Natural killer cell (primary cell): ENCODE measurements at regions of chr1 and their contacts with region 1.

Region 1: GRCh38 chr1:167220537-167221125 is at the start of gene POU2F1:
- DNase-seq: peak; percentile 97 to 100
- ATAC-seq: peak; percentile 77 to 95 (median 81)
- H3K4me3 ChIP-seq: peak within 1 kb of the TSS; percentile 98
- H3K4me3 Mint-ChIP-seq: peak within 1 kb of the TSS; percentile 93
- H3K27ac ChIP-seq: peak within 1 kb of the TSS; percentile 95
- H3K27ac Mint-ChIP-seq: peak within 1 kb of the TSS; percentile 97
- H3K4me1 ChIP-seq: peaks cover 11% of the 10 kb centered on the region
- H3K4me1 Mint-ChIP-seq: peaks cover 46 to 48% of the 10 kb centered on the region in 2 donors
- H3K27me3 ChIP-seq: no peaks in the 10 kb centered on the region
- H3K27me3 Mint-ChIP-seq: no peaks in the 10 kb centered on the region
- CTCF ChIP-seq: peak; percentile 63
- total RNA-seq, gene POU2F1: 39.8 to 44.6 (median 40.9) TPM

Region 2: DNA sequence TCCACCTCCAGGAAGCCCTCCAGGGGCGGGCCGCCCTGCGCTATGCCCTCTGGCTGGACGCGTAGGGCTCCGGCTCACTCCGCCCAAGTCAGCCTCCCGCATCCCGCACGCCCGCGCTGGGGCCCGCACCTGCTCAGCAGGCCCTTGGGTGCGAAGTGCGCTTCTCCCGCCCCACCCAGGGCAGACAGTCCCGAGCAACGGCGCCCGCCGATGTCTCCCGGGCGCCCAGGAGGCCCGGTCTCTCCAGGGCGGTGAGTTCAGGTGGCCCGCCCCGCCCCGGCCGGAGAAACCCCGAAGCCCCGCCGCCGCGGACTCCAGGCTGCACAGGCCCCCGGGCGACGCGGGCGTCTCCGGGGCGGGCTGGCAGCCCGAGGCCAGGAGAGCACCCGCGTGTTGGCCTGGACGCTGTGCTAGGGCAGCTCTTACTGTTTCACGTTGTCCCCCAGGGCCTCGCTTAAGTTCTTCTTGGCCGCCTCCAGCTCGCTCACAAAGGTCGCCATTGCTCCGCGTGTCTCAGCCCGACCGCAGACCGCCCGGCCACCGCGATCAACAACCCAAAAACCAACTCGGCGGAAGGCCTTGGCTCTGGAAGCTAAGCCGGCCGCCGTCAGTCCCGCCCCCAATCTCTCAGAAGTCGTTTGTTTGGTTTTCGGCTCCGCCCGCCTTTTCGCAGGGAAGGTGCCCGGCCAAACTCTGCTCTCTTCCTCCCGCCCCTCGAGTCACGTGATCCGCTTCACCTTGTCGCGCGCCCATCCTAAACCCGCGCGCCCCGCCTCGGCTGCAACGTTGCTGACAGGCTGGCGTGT is 344.7 kb before region 1 on chr1 and contains the start of gene TADA1:
- intact Hi-C with region 1: loop called (anchors 2 kb)
- DNase-seq: peak; percentile 93 to 99
- ATAC-seq: peak; percentile 89 to 94 (median 91)
- H3K4me3 ChIP-seq: peak within 1 kb of the TSS; percentile 60
- H3K4me3 Mint-ChIP-seq: peak within 1 kb of the TSS; percentile 99
- H3K27ac ChIP-seq: peak within 1 kb of the TSS; percentile 73
- H3K27ac Mint-ChIP-seq: peak within 1 kb of the TSS; percentile 91 to 93
- H3K4me1 ChIP-seq: peaks cover 13% of the 10 kb centered on the region
- H3K4me1 Mint-ChIP-seq: peaks cover 23 to 35% of the 10 kb centered on the region in 2 donors
- H3K27me3 ChIP-seq: no peaks in the 10 kb centered on the region
- H3K27me3 Mint-ChIP-seq: peaks cover 0 to 6% of the 10 kb centered on the region in 2 donors
- CTCF ChIP-seq: no peak
- total RNA-seq, gene TADA1: 11.7 to 13.7 (median 12.5) TPM

Region 3: GRCh38 chr1:167430134-167430856 is 209.7 kb after region 1 on chr1:
- intact Hi-C with region 1: loop called (anchors 2 kb)
- DNase-seq: peak; percentile 52 to 58
- ATAC-seq: peak; percentile 20 to 50 (median 21)
- H3K4me3 ChIP-seq: no peak overlapping the region
- H3K4me3 Mint-ChIP-seq: peak overlapping the region; percentile 85
- H3K27ac ChIP-seq: peak overlapping the region; percentile 98
- H3K27ac Mint-ChIP-seq: peak overlapping the region; percentile 91 to 100
- H3K4me1 ChIP-seq: peaks cover 82% of the 10 kb centered on the region
- H3K4me1 Mint-ChIP-seq: peaks cover 87 to 89% of the 10 kb centered on the region in 2 donors
- H3K27me3 ChIP-seq: no peaks in the 10 kb centered on the region
- H3K27me3 Mint-ChIP-seq: no peaks in the 10 kb centered on the region
- CTCF ChIP-seq: no peak

Region 4: DNA sequence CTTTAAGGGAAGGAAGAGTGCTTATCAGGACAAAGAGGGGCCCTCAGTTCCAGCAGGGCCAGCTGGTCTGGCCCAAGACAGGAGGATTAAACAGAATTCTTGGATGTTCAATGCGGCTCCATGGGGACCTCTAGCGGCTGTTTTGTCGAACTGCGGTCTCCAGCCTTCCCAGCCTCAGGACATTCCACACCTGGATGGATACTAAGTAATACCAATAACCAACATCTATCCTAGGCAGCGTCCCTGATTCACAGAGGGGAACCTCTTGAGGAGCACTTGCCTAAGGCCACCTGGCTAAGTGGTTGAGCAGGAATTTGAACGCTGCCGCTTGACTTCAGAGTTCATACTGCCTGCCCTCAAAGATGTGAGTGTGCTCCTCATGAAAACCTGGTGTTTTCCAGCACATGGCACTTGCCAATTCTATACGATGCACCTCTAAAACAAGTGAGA is 313.2 kb after region 1 on chr1:
- intact Hi-C with region 1: loop called (anchors 5 kb)
- DNase-seq: peak; percentile 65 to 84
- ATAC-seq: peak; percentile 87 to 99 (median 96)
- H3K4me3 ChIP-seq: no peak overlapping the region
- H3K4me3 Mint-ChIP-seq: no peak overlapping the region
- H3K27ac ChIP-seq: no peak overlapping the region
- H3K27ac Mint-ChIP-seq: peak overlapping the region in 1 of 2 donors; percentile 22
- H3K4me1 ChIP-seq: peaks cover 6% of the 10 kb centered on the region
- H3K4me1 Mint-ChIP-seq: no peaks in the 10 kb centered on the region
- H3K27me3 ChIP-seq: no peaks in the 10 kb centered on the region
- H3K27me3 Mint-ChIP-seq: no peaks in the 10 kb centered on the region
- CTCF ChIP-seq: peak; percentile 91